ENCODE measurements at regions of chr17 and their contacts with region 1.

Region 1: GRCh38 chr17:409848-410545 is 57.4 kb upstream of the RPH3AL start:
- DNase-seq: peak; percentile 100
- H3K4me3 ChIP-seq: peak overlapping the region; percentile 79
- H3K27ac ChIP-seq: peak overlapping the region; percentile 35
- H3K4me1 ChIP-seq: peaks cover 13% of the 10 kb centered on the region
- CTCF ChIP-seq: no peak

Region 2: GRCh38 chr17:441150-441549 is 31.2 kb after region 1 on chr17:
- CTCF ChIA-PET with region 1: no interaction called
- POLR2A ChIA-PET with region 1: no interaction called
- intact Hi-C with region 1: no loop called
- DNase-seq: no peak
- H3K4me3 ChIP-seq: no peak overlapping the region
- H3K27ac ChIP-seq: no peak overlapping the region
- H3K4me1 ChIP-seq: no peaks in the 10 kb centered on the region
- CTCF ChIP-seq: no peak

Region 3: GRCh38 chr17:511001-511698 is 101.2 kb after region 1 on chr17:
- CTCF ChIA-PET with region 1: no interaction called
- POLR2A ChIA-PET with region 1: no interaction called
- intact Hi-C with region 1: loop called (anchors 5 kb)
- DNase-seq: no peak
- H3K4me3 ChIP-seq: no peak overlapping the region
- H3K27ac ChIP-seq: no peak overlapping the region
- H3K4me1 ChIP-seq: no peaks in the 10 kb centered on the region
- CTCF ChIP-seq: no peak

Region 4: GRCh38 chr17:700504-701094 is 290.6 kb after region 1 on chr17:
- CTCF ChIA-PET with region 1: interaction called, 6 read pairs
- POLR2A ChIA-PET with region 1: no interaction called
- intact Hi-C with region 1: loop called (anchors 1 kb)
- DNase-seq: peak; percentile 52
- H3K4me3 ChIP-seq: no peak overlapping the region
- H3K27ac ChIP-seq: no peak overlapping the region
- H3K4me1 ChIP-seq: no peaks in the 10 kb centered on the region
- CTCF ChIP-seq: peak; percentile 89